ENCODE measurements at regions of chr11 and their contacts with region 1.

Region 1: GRCh38 chr11:36364551-36365325 is 68.7 kb downstream of the PRR5L start:
- DNase-seq: no peak
- ATAC-seq: no peak
- H3K4me3 ChIP-seq: no peak overlapping the region
- H3K27ac ChIP-seq: no peak overlapping the region
- H3K4me1 ChIP-seq: peaks cover 13% of the 10 kb centered on the region
- H3K27me3 ChIP-seq: no peaks in the 10 kb centered on the region
- CTCF ChIP-seq: no peak
- POLR2A ChIP-seq: no peak
- RAD21 ChIP-seq: no peak

Region 2: GRCh38 chr11:36574486-36574885 is 209.7 kb after region 1 on chr11:
- CTCF ChIA-PET with region 1: no interaction called
- POLR2A ChIA-PET with region 1: no interaction called
- dilution Hi-C with region 1: no loop called
- in situ Hi-C with region 1: no loop called
- intact Hi-C with region 1: loop called (anchors 5 kb)
- DNase-seq: no peak
- ATAC-seq: no peak
- H3K4me3 ChIP-seq: no peak overlapping the region
- H3K27ac ChIP-seq: no peak overlapping the region
- H3K4me1 ChIP-seq: no peaks in the 10 kb centered on the region
- H3K27me3 ChIP-seq: peaks cover 6% of the 10 kb centered on the region
- CTCF ChIP-seq: no peak
- POLR2A ChIP-seq: no peak
- RAD21 ChIP-seq: no peak

Region 3: DNA sequence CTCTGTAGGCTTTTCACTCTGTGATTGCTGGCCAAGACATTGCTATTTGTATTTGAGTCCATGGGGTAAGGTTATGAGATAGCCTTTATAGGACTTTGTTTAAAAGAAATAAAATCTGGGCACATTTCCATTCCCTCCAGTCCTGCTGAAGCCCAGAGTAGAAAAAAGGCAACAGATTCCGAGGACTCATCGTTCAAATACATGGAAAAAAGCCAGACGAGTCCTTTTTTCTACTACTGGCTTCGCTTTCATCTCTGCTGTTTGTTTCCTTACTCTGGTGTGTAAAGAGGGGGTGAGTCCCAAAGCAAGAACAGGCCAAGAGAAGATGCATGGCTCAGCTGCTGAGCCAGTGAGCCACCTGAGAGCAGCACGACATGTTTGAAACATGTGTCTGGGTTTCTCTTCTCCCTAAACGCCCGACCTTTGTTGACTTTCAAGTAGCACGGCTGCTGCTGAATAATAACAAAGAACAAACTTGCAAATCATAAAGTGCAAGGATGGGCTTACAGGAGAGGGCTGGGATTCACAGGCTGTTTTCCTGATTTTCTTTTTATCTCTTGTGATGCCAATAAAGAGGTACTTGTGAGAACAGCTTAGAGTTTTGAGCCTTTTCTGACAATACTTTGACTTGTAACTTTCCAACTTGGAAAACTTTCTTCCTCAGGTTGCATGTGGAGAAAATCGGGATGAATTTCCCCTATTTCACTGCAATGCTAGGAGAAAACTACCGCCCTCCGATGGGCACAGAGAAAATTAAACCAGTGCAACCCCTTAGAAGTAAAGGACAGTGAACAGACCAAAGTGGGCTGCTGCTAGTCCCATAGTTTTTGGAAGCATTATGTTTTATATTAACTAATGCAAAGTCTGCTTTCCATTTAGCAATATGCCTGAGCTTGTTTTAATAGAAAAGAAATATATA is 428.5 kb after region 1 on chr11:
- CTCF ChIA-PET with region 1: no interaction called
- POLR2A ChIA-PET with region 1: no interaction called
- dilution Hi-C with region 1: no loop called
- in situ Hi-C with region 1: no loop called
- intact Hi-C with region 1: no loop called
- DNase-seq: no peak
- ATAC-seq: no peak
- H3K4me3 ChIP-seq: no peak overlapping the region
- H3K27ac ChIP-seq: no peak overlapping the region
- H3K4me1 ChIP-seq: no peaks in the 10 kb centered on the region
- H3K27me3 ChIP-seq: peaks cover 1% of the 10 kb centered on the region; the same call in 1 of the 2 replicates
- CTCF ChIP-seq: no peak
- POLR2A ChIP-seq: no peak
- RAD21 ChIP-seq: no peak